Dorsolateral prefrontal cortex (tissue), 120 donors: ENCODE measurements at regions of chr17 and their contacts with region 1.

Region 1: GRCh38 chr17:31433091-31433790 is 41.8 kb downstream of the RAB11FIP4 start:
- DNase-seq: no peak
- H3K4me3 ChIP-seq: no peak overlapping the region
- H3K27ac ChIP-seq: peak overlapping the region in 2 of 59 donors; percentile 17 to 41
- H3K27me3 ChIP-seq: no peaks in the 10 kb centered on the region
- CTCF ChIP-seq: no peak

Region 2: GRCh38 chr17:31524926-31525800 is 91.9 kb after region 1 on chr17:
- intact Hi-C with region 1: loop called (anchors 1 to 2 kb)
- DNase-seq: peak; percentile 79 to 94 (median 89)
- H3K4me3 ChIP-seq: peak overlapping the region in 1 of 59 donors; percentile 9
- H3K27ac ChIP-seq: peak overlapping the region in 42 of 59 donors; percentile 6 to 77 (median 50)
- H3K27me3 ChIP-seq: no peaks in the 10 kb centered on the region
- CTCF ChIP-seq: peak; percentile 64 to 99 (median 96)

Region 3: GRCh38 chr17:31549525-31550388 is 116.5 kb after region 1 on chr17:
- intact Hi-C with region 1: no loop called
- DNase-seq: peak; percentile 86 to 96 (median 90)
- H3K4me3 ChIP-seq: peak overlapping the region; percentile 64 to 98 (median 87)
- H3K27ac ChIP-seq: peak overlapping the region; percentile 69 to 98 (median 90)
- H3K27me3 ChIP-seq: no peaks in the 10 kb centered on the region
- CTCF ChIP-seq: peak in 28 of 56 donors; percentile 5 to 49 (median 22)